Body of pancreas (tissue), 4 donors: ENCODE measurements at regions of chr2 and their contacts with region 1.

Region 1: GRCh38 chr2:18149645-18150246 is 271.3 kb downstream of the KCNS3 start:
- DNase-seq: no peak
- ATAC-seq: peak; percentile 45
- H3K4me3 ChIP-seq: no peak overlapping the region
- H3K27ac ChIP-seq: no peak overlapping the region
- H3K4me1 ChIP-seq: no peaks in the 10 kb centered on the region
- H3K27me3 ChIP-seq: no peaks in the 10 kb centered on the region
- CTCF ChIP-seq: peak; percentile 50 to 77 (median 67)
- POLR2A ChIP-seq: no peak

Region 2: GRCh38 chr2:17851731-17852585 is 297.8 kb before region 1 on chr2:
- intact Hi-C with region 1: loop called (anchors 10 kb)
- DNase-seq: peak; percentile 53 to 64 (median 60)
- ATAC-seq: peak; percentile 81
- H3K4me3 ChIP-seq: no peak overlapping the region
- H3K27ac ChIP-seq: no peak overlapping the region
- H3K4me1 ChIP-seq: no peaks in the 10 kb centered on the region
- H3K27me3 ChIP-seq: no peaks in the 10 kb centered on the region
- CTCF ChIP-seq: peak; percentile 77 to 94 (median 89)
- POLR2A ChIP-seq: no peak